ENCODE measurements at regions of chr3 and their contacts with region 1.

Region 1: DNA sequence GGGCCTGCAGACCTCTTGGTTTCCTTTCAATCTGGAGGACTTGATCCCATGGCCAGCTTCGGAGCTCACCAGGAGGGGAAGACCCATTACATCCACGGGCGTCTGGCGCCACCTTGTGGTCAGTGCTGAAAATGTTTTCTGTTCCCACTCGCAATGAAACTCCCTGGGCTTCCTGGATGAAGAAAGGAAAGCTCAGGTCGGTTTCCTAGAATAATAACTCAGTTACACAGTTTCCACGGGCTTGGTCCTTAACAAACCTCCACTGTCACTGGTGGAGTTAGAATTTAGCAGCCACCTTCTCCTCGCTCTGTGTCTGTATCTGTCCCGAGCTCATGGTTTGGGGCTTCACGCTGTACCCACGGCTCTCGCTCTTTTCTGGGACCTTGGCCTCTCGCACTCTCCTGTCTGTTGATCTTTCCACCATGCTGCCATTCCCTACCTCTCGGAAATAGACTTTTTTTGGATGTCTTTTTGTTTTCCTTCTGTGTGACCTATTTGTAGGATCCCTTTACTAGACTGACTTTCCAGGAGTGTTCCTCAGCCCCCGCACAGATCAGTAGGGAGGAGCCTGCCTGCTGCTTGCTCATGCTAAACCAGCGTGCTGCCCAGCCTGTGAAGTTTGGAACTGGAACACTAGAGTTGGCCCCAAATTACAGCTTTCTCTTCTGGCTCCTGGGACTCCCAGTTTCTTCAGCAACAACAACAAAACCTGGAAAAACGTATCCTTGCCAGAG is 56.3 kb downstream of the IL20RB start:
- DNase-seq: peak; percentile 86
- ATAC-seq: peak; percentile 92
- H3K4me3 ChIP-seq: peak overlapping the region; percentile 42
- H3K27ac ChIP-seq: peak overlapping the region; percentile 24
- H3K4me1 ChIP-seq: peaks cover 4% of the 10 kb centered on the region; the same call in 1 of the 2 replicates
- H3K27me3 ChIP-seq: no peaks in the 10 kb centered on the region
- CTCF ChIP-seq: peak; percentile 95
- POLR2A ChIP-seq: peak; percentile 63; the same call in 1 of the 2 replicates
- RAD21 ChIP-seq: peak; percentile 99

Region 2: DNA sequence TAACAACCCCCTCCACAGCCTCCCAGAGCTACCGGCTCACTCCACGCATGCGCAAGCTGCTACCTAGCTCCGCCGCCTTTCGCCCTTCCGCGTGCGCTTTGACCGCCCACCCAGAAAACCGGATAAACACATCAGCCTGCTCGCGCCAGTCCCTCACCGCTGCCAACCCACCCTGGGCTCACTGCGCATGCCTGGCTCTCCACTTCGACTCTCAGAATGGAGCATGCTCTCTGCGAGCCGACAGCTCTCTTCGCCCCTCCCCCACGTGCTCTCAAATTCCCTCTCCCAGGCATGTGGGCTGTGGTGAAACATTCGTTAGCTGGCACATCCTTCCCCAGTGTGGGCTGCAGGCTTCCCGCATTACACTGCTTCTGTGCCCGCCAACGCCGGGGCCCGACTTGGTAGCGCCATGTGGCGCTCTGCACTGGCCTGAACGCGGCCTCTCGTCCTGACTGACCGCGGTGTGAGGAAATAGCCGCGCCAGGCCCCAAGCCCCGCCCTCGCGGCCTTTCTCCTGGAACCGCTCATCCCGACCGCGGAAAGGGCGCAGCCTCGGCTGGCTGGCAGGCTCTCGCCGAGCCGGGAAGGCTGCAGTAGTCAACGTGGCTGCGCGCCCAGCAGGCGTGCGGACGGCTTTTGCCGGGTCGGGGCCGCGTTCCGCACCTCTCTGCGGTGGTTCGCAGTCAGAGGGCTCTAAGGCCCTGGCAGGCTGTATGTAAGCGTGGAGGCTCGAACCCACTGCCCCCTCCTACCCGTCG is 817.5 kb before region 1 on chr3:
- CTCF ChIA-PET with region 1: no interaction called
- POLR2A ChIA-PET with region 1: no interaction called
- dilution Hi-C with region 1: no loop called
- in situ Hi-C with region 1: no loop called
- intact Hi-C with region 1: loop called (anchors 5 kb)
- DNase-seq: peak; percentile 100
- ATAC-seq: peak; percentile 79
- H3K4me3 ChIP-seq: peak overlapping the region; percentile 97
- H3K27ac ChIP-seq: peak overlapping the region; percentile 81
- H3K4me1 ChIP-seq: peaks cover 3% of the 10 kb centered on the region; the same call in 1 of the 2 replicates
- H3K27me3 ChIP-seq: no peaks in the 10 kb centered on the region
- CTCF ChIP-seq: no peak
- POLR2A ChIP-seq: peak; percentile 88
- RAD21 ChIP-seq: peak; percentile 9; the same call in 1 of the 2 replicates

Region 3: GRCh38 chr3:136305878-136306277 is 708.2 kb before region 1 on chr3:
- CTCF ChIA-PET with region 1: interaction called, 10 read pairs
- POLR2A ChIA-PET with region 1: no interaction called
- dilution Hi-C with region 1: no loop called
- in situ Hi-C with region 1: loop called (anchors 5 kb)
- intact Hi-C with region 1: loop called (anchors 1 kb)
- DNase-seq: peak; percentile 70
- ATAC-seq: peak; percentile 92
- H3K4me3 ChIP-seq: no peak overlapping the region
- H3K27ac ChIP-seq: no peak overlapping the region
- H3K4me1 ChIP-seq: no peaks in the 10 kb centered on the region
- H3K27me3 ChIP-seq: no peaks in the 10 kb centered on the region
- CTCF ChIP-seq: peak; percentile 87
- POLR2A ChIP-seq: no peak
- RAD21 ChIP-seq: peak; percentile 88

Region 4: GRCh38 chr3:136545664-136546268 is 468.4 kb before region 1 on chr3:
- CTCF ChIA-PET with region 1: interaction called, 4 read pairs
- POLR2A ChIA-PET with region 1: no interaction called
- dilution Hi-C with region 1: no loop called
- in situ Hi-C with region 1: no loop called
- intact Hi-C with region 1: loop called (anchors 5 kb)
- DNase-seq: peak; percentile 51
- ATAC-seq: peak; percentile 54; the same call in 1 of the 2 replicates
- H3K4me3 ChIP-seq: no peak overlapping the region
- H3K27ac ChIP-seq: no peak overlapping the region
- H3K4me1 ChIP-seq: peaks cover 13% of the 10 kb centered on the region
- H3K27me3 ChIP-seq: no peaks in the 10 kb centered on the region
- CTCF ChIP-seq: peak; percentile 53
- POLR2A ChIP-seq: no peak
- RAD21 ChIP-seq: peak; percentile 54

Region 5: DNA sequence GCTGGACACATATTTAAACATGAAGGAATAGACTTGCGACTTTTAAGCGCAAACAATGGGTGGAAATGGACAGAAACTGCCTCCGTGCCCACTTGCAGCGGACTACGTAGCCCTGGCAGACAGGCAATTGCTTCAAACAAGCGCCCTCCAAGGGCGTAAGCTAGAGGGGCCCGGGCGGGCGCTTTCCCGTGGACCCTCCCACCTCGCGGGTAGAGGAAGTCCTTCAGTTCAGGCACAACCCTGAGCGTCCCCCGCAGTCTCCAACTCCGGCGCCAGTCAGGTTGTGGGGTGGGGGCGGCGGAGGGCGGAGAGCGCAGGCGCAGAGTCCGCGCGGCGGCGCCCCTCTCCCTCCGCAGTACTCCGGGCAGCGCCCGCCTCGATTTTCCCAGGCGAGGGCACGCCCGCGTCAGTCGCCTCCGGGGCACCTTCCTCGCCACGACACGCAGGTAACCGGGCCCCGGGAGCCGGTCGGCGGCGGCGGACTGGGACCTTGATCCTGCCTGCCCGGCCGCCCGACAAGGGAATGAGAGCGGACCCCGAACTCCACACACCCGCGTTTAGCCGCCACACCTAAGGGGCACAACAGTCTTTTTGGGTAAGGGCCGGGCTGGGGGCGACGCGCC is 195.2 kb before region 1 on chr3 and contains the start of gene SLC35G2:
- CTCF ChIA-PET with region 1: no interaction called
- POLR2A ChIA-PET with region 1: no interaction called
- dilution Hi-C with region 1: no loop called
- in situ Hi-C with region 1: no loop called
- intact Hi-C with region 1: loop called (anchors 1 kb)
- DNase-seq: peak; percentile 52
- ATAC-seq: peak; percentile 79
- H3K4me3 ChIP-seq: peak within 1 kb of the TSS; percentile 48
- H3K27ac ChIP-seq: peak within 1 kb of the TSS; percentile 75
- H3K4me1 ChIP-seq: peaks cover 4% of the 10 kb centered on the region
- H3K27me3 ChIP-seq: no peaks in the 10 kb centered on the region
- CTCF ChIP-seq: 0 out of 2 replicates have a peak, but pooled peaks have one; percentile 4
- POLR2A ChIP-seq: peak; percentile 12; the same call in 1 of the 2 replicates
- RAD21 ChIP-seq: no peak
- total RNA-seq, gene SLC35G2: 6.6 and 8.6 TPM in 2 replicates

Region 6: GRCh38 chr3:136949708-136950107 is 64.4 kb before region 1 on chr3:
- CTCF ChIA-PET with region 1: interaction called, 4 read pairs
- POLR2A ChIA-PET with region 1: no interaction called
- dilution Hi-C with region 1: no loop called
- in situ Hi-C with region 1: no loop called
- intact Hi-C with region 1: loop called (anchors 1 kb)
- DNase-seq: no peak
- ATAC-seq: no peak
- H3K4me3 ChIP-seq: no peak overlapping the region
- H3K27ac ChIP-seq: no peak overlapping the region
- H3K4me1 ChIP-seq: peaks cover 5% of the 10 kb centered on the region
- H3K27me3 ChIP-seq: no peaks in the 10 kb centered on the region
- CTCF ChIP-seq: peak; percentile 36; the same call in 1 of the 2 replicates
- POLR2A ChIP-seq: no peak
- RAD21 ChIP-seq: peak; percentile 21

Region 7: GRCh38 chr3:137032465-137033120 is 18.5 kb after region 1 on chr3:
- CTCF ChIA-PET with region 1: interaction called, 10 read pairs
- POLR2A ChIA-PET with region 1: no interaction called
- dilution Hi-C with region 1: no loop called
- in situ Hi-C with region 1: no loop called
- intact Hi-C with region 1: no loop called
- DNase-seq: peak; percentile 76
- ATAC-seq: peak; percentile 98
- H3K4me3 ChIP-seq: peak overlapping the region; percentile 41
- H3K27ac ChIP-seq: no peak overlapping the region
- H3K4me1 ChIP-seq: no peaks in the 10 kb centered on the region
- H3K27me3 ChIP-seq: peaks cover 2% of the 10 kb centered on the region
- CTCF ChIP-seq: peak; percentile 83
- POLR2A ChIP-seq: no peak
- RAD21 ChIP-seq: peak; percentile 73